ENCODE measurements at regions of chr11 and their contacts with region 1.

Region 1: DNA sequence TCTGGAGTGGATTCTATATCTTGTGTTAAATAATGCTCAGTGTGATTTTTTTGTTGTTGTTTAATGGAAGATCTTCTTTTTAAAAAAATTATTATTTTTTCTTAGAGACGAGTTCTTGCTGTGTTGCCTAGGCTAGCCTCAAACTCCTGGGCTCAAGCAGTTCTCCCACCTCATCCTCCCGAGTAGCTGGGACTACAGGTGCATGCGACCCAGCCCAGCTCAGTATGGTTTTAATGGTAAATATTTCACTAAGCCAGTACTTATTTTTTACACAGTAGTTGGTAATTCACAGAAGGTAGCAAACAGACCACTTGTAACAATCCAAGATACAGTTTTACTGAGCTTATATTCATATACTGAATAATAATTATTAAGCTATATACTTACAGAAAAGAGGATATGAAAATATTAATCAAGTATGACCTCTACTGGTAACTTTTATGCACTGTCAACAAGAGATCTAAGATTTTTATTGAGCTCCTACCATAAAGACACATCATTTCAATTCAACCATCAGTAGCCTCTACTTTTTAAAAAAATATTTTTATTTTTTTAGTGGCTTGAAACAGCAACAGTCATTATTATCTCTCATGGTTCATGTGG is 6.1 kb upstream of the CD59 start:
- DNase-seq: no peak
- ATAC-seq: peak; percentile 63
- H3K4me3 ChIP-seq: no peak overlapping the region
- H3K27ac ChIP-seq: no peak overlapping the region
- H3K4me1 ChIP-seq: peaks cover 0 to 4% of the 10 kb centered on the region in 2 experiments; a peak in 2 of 4 replicates
- H3K27me3 ChIP-seq: no peaks in the 10 kb centered on the region
- CTCF ChIP-seq: peak; percentile 26 to 56 (median 42); a peak in 3 of 6 replicates
- POLR2A ChIP-seq: no peak
- RAD21 ChIP-seq: peak; percentile 70; the same call in 1 of the 2 replicates

Region 2: GRCh38 chr11:33362051-33362910 is 380.1 kb before region 1 on chr11:
- CTCF ChIA-PET with region 1: interaction called, 32 read pairs
- POLR2A ChIA-PET with region 1: no interaction called
- RAD21 ChIA-PET with region 1: interaction called in 1 of 2 experiments, 6 read pairs
- intact Hi-C with region 1: loop called (anchors 1 kb)
- DNase-seq: peak; percentile 32
- ATAC-seq: peak; percentile 70
- H3K4me3 ChIP-seq: no peak overlapping the region
- H3K27ac ChIP-seq: no peak overlapping the region
- H3K4me1 ChIP-seq: no peaks in the 10 kb centered on the region
- H3K27me3 ChIP-seq: no peaks in the 10 kb centered on the region
- CTCF ChIP-seq: peak; percentile 42 to 85 (median 72)
- POLR2A ChIP-seq: no peak
- RAD21 ChIP-seq: peak; percentile 79

Region 3: GRCh38 chr11:33598426-33599069 is 143.8 kb before region 1 on chr11:
- CTCF ChIA-PET with region 1: no interaction called
- POLR2A ChIA-PET with region 1: no interaction called
- RAD21 ChIA-PET with region 1: no interaction called
- intact Hi-C with region 1: no loop called
- DNase-seq: no peak
- ATAC-seq: no peak
- H3K4me3 ChIP-seq: no peak overlapping the region
- H3K27ac ChIP-seq: no peak overlapping the region
- H3K4me1 ChIP-seq: no peaks in the 10 kb centered on the region
- H3K27me3 ChIP-seq: peaks cover 5% of the 10 kb centered on the region; the same call in 1 of the 2 replicates
- CTCF ChIP-seq: no peak
- POLR2A ChIP-seq: no peak
- RAD21 ChIP-seq: no peak

Region 4: GRCh38 chr11:33682446-33682845 is 59.9 kb before region 1 on chr11:
- CTCF ChIA-PET with region 1: interaction called, 57 read pairs
- POLR2A ChIA-PET with region 1: no interaction called
- RAD21 ChIA-PET with region 1: interaction called in 1 of 2 experiments, 3 read pairs
- intact Hi-C with region 1: no loop called
- DNase-seq: no peak
- ATAC-seq: peak; percentile 90
- H3K4me3 ChIP-seq: no peak overlapping the region
- H3K27ac ChIP-seq: no peak overlapping the region
- H3K4me1 ChIP-seq: peaks cover 2 to 15% of the 10 kb centered on the region in 2 experiments; a peak in 2 of 4 replicates
- H3K27me3 ChIP-seq: no peaks in the 10 kb centered on the region
- CTCF ChIP-seq: peak; percentile 38 to 65 (median 48); a peak in 5 of 6 replicates
- POLR2A ChIP-seq: no peak
- RAD21 ChIP-seq: peak; percentile 86

Region 5: DNA sequence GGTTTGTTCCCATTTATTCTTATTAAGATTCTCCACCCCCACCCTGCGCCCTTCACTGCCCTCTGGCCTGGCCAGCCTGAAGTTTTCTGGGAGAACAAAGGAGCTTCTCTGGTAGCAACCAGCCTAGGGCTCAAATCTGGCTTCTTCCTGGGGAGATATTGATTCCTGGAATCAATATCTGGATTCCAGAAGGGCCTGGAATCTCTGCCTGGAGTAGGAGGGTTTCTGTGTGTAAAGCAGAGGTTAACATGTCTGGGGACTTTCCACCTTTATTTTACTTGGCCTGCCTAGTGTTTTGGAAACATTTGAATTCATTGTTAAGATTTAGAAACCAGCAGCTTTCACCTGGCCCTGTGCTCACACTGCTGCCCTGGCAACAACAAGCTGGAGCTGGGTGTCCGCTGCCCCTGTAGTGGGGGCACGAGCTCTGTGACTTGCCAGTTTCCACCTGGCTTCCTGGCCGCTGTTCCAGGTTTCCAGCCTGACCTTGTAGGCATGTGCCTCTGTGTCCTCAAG is 47.2 kb before region 1 on chr11:
- CTCF ChIA-PET with region 1: interaction called, 57 read pairs
- POLR2A ChIA-PET with region 1: interaction called, 7 read pairs
- RAD21 ChIA-PET with region 1: interaction called in 1 of 2 experiments, 11 read pairs
- intact Hi-C with region 1: loop called (anchors 5 kb)
- DNase-seq: no peak
- ATAC-seq: no peak
- H3K4me3 ChIP-seq: no peak overlapping the region
- H3K27ac ChIP-seq: no peak overlapping the region
- H3K4me1 ChIP-seq: peaks cover 40 to 76% of the 10 kb centered on the region in 2 experiments
- H3K27me3 ChIP-seq: no peaks in the 10 kb centered on the region
- CTCF ChIP-seq: no peak
- POLR2A ChIP-seq: no peak
- RAD21 ChIP-seq: no peak

Region 6: GRCh38 chr11:33716236-33716635 is 26.1 kb before region 1 on chr11:
- CTCF ChIA-PET with region 1: interaction called, 67 read pairs
- POLR2A ChIA-PET with region 1: interaction called, 4 read pairs
- RAD21 ChIA-PET with region 1: interaction called, 4 to 12 read pairs
- intact Hi-C with region 1: no loop called
- DNase-seq: no peak
- ATAC-seq: peak; percentile 75
- H3K4me3 ChIP-seq: no peak overlapping the region
- H3K27ac ChIP-seq: no peak overlapping the region
- H3K4me1 ChIP-seq: no peaks in the 10 kb centered on the region
- H3K27me3 ChIP-seq: no peaks in the 10 kb centered on the region
- CTCF ChIP-seq: peak; percentile 37 to 51 (median 47); a peak in 4 of 6 replicates
- POLR2A ChIP-seq: no peak
- RAD21 ChIP-seq: peak; percentile 66

Region 7: GRCh38 chr11:33761471-33761870 is 19.1 kb after region 1 on chr11:
- CTCF ChIA-PET with region 1: interaction called, 12 read pairs
- POLR2A ChIA-PET with region 1: no interaction called
- RAD21 ChIA-PET with region 1: no interaction called
- intact Hi-C with region 1: no loop called
- DNase-seq: no peak
- ATAC-seq: no peak
- H3K4me3 ChIP-seq: no peak overlapping the region
- H3K27ac ChIP-seq: no peak overlapping the region
- H3K4me1 ChIP-seq: no peaks in the 10 kb centered on the region
- H3K27me3 ChIP-seq: no peaks in the 10 kb centered on the region
- CTCF ChIP-seq: no peak
- POLR2A ChIP-seq: no peak
- RAD21 ChIP-seq: no peak

Region 8: DNA sequence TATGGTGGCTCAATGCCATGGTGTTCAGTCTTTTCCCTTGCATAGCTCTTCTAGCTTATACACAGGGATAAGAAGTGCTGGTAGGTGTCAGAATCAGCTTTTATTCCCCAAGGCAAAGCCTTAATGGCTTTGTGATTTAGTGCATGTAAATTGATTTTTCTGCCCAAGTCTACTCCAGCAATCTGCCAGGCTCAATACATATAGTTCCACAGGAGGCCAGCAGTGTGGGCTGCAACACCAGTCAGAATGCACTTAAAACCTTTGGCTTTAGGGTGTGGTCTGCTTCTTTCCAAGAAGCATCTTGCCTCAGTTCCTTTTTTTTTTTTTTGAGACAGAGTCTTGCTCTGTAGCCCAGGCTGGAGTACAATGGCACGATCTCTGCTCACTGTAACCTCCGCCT is 294.7 kb after region 1 on chr11:
- CTCF ChIA-PET with region 1: no interaction called
- POLR2A ChIA-PET with region 1: no interaction called
- RAD21 ChIA-PET with region 1: no interaction called
- intact Hi-C with region 1: no loop called
- DNase-seq: no peak
- ATAC-seq: no peak
- H3K4me3 ChIP-seq: no peak overlapping the region
- H3K27ac ChIP-seq: no peak overlapping the region
- H3K4me1 ChIP-seq: peaks cover 0 to 5% of the 10 kb centered on the region in 2 experiments; a peak in 1 of 4 replicates
- H3K27me3 ChIP-seq: no peaks in the 10 kb centered on the region
- CTCF ChIP-seq: no peak
- POLR2A ChIP-seq: no peak
- RAD21 ChIP-seq: no peak

Region 9: DNA sequence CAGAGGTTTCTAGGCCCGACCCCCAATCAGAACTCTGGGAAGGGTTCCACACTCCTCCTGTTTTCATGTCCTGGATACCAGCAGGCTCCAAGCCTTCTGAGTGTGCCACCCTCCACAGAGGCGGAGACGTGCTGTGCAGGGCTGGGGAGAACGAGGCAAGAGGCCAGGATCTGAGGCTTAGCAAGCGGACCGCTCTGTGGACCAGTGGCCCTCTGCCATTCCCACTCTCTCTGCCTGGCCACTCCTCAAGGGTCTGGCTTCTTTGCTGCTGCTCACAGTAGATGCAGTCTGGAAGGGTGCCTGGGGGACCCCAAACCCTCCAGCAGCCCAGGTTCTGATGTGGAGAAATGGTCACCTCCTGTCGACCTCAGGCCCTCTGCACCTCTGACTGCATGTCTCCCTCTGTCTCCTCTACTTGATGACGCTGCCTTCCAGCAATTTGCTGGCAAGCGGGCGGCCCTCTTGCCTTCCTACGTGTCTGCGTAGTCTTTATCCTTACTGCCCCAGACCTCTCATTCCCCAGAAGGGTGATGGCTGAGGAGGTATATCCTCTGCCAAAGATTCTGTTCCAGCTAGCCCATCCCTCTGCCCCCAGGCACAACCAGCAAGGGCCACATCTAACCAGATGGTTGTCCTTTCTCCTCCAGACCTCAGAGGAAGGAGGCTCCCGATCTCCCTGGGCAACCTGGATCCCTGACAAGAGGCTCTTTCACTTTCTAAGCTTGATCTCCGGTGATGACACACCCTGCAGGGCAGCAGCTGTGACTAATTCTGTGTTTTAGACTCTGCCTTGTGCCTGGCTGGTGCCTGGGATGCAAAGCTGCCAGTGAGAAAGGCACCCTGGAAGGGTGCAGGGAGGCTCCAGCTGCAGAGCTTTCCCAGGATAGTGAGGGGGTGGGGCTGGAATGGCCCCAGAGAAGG is 450.4 kb after region 1 on chr11:
- CTCF ChIA-PET with region 1: no interaction called
- POLR2A ChIA-PET with region 1: no interaction called
- RAD21 ChIA-PET with region 1: no interaction called
- intact Hi-C with region 1: no loop called
- DNase-seq: peak; percentile 60
- ATAC-seq: peak; percentile 87
- H3K4me3 ChIP-seq: peak overlapping the region in 1 of 2 experiments; percentile 26; a peak in 1 of 4 replicates
- H3K27ac ChIP-seq: 0 out of 2 replicates have a peak overlapping the region, but pooled peaks have one; percentile 1
- H3K4me1 ChIP-seq: peaks cover 19 to 42% of the 10 kb centered on the region in 2 experiments
- H3K27me3 ChIP-seq: no peaks in the 10 kb centered on the region
- CTCF ChIP-seq: no peak
- POLR2A ChIP-seq: no peak
- RAD21 ChIP-seq: no peak